ENCODE measurements at regions of chr6 and their contacts with region 1.

Region 1: GRCh38 chr6:166325383-166326042 is 16.8 kb downstream of the SFT2D1 start:
- DNase-seq: no peak
- H3K4me3 ChIP-seq: no peak overlapping the region
- H3K27ac ChIP-seq: no peak overlapping the region
- H3K4me1 ChIP-seq: no peaks in the 10 kb centered on the region
- H3K27me3 ChIP-seq: no peaks in the 10 kb centered on the region
- CTCF ChIP-seq: no peak
- POLR2A ChIP-seq: no peak

Region 2: DNA sequence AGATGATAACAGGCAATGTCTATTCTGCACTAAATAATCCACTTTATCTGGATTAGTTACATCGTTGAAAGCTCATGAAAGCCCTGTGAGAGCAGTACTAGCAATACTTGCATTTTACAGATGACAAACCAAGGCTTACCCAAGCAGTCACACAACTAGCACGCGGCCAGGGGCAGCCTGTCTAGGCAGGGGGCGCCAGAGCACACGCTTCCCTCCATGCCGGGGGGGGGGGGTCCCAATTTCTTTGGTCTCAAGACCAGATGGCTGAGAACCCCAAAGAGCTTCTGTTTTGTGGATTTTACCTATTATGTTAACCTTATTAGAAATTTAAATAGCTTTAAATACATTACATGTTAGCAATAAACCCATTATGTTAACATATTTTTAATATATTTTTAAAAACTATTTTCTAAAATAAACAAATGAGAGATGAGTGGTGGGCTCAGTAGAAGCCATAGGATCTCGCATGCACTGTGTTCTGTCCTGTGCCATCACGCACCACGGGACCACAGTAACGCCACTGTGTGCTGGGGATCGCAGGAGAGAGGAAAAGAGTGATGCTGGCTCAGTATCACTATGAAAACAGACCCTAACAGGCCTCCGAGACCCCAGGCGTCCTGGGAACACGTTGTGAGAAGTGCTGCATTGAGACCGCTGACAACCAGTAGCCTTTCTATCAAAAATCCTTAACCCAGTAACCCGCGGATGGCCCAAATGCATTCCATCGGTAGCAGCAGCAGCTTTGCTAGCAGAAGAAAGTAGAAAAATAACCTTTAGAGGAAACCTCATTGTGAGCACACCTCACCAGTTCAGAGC is 12.1 kb before region 1 on chr6:
- CTCF ChIA-PET with region 1: interaction called, 13 read pairs
- POLR2A ChIA-PET with region 1: interaction called, 4 read pairs
- dilution Hi-C with region 1: no loop called
- intact Hi-C with region 1: no loop called
- DNase-seq: peak; percentile 45
- H3K4me3 ChIP-seq: no peak overlapping the region
- H3K27ac ChIP-seq: no peak overlapping the region
- H3K4me1 ChIP-seq: no peaks in the 10 kb centered on the region
- H3K27me3 ChIP-seq: peaks cover 19 to 23% of the 10 kb centered on the region in 2 experiments
- CTCF ChIP-seq: peak; percentile 73
- POLR2A ChIP-seq: no peak

Measured in endothelial cell of umbilical vein (primary cell).